ENCODE measurements at regions of chr10 and their contacts with region 1.

Region 1: DNA sequence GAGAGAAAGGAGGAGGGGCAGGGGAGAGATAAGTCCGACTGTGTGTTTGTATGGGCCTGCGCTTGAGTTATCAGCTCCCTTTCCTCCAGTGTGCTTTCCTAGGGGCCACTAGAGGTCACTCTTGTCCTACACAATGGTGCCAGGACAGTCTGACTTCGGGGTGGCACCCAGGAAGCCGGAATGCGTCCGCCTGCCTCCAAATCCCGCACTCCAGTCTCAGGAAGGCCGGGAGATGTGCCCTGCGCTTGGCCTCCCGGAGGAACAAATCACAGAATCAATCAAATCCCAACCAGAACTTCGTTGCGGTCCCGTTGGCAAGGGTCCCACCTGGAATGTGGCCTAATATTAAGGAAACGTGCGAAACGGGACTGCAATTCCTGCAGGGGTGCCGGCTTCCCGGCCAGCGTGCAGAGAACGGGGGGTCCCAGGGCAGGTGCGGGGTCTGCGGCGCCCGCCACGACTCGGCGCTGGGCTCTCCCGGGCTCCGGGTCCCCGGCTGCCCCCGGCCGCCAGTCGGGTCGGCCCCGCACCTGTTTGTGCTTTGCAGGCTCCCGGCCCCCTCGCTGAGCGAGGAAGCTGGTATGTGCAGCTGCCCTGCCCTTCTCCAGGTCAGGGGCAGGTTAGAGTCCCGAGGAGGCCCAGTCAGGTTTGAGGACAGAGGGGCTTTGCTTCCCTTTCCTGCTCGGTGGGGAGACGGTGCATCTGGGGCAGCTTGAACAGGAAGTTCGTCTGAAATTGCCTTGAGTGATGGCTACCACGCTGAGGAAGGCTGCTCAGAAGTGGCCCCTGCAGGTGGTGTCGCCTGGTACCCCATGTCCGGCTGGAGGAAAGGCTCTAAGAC is 21.0 kb upstream of the HPS1 start:
- DNase-seq: peak; percentile 90
- ATAC-seq: peak; percentile 93 to 99
- H3K4me3 ChIP-seq: peak overlapping the region; percentile 76
- H3K27ac ChIP-seq: peak overlapping the region; percentile 78 to 85
- H3K4me1 ChIP-seq: no peaks in the 10 kb centered on the region
- CTCF ChIP-seq: peak; percentile 92
- EP300 ChIP-seq: no peak
- POLR2A ChIP-seq: no peak
- RAD21 ChIP-seq: peak; percentile 96 to 97

Region 2: GRCh38 chr10:98425511-98426352 is 42.0 kb before region 1 on chr10:
- CTCF ChIA-PET with region 1: interaction called, 13 read pairs
- POLR2A ChIA-PET with region 1: no interaction called
- DNase-seq: peak; percentile 64
- ATAC-seq: peak; percentile 80 to 92
- H3K4me3 ChIP-seq: no peak overlapping the region
- H3K27ac ChIP-seq: no peak overlapping the region
- H3K4me1 ChIP-seq: no peaks in the 10 kb centered on the region
- CTCF ChIP-seq: peak; percentile 68
- EP300 ChIP-seq: no peak
- POLR2A ChIP-seq: no peak
- RAD21 ChIP-seq: peak; percentile 56 to 66

Region 3: GRCh38 chr10:98478430-98479222 is 10.9 kb after region 1 on chr10:
- CTCF ChIA-PET with region 1: interaction called, 46 read pairs
- POLR2A ChIA-PET with region 1: no interaction called
- DNase-seq: no peak
- ATAC-seq: no peak
- H3K4me3 ChIP-seq: no peak overlapping the region
- H3K27ac ChIP-seq: no peak overlapping the region
- H3K4me1 ChIP-seq: no peaks in the 10 kb centered on the region
- CTCF ChIP-seq: no peak
- EP300 ChIP-seq: no peak
- POLR2A ChIP-seq: no peak
- RAD21 ChIP-seq: no peak

Region 4: GRCh38 chr10:99172130-99172738 is 704.5 kb after region 1 on chr10:
- CTCF ChIA-PET with region 1: interaction called, 10 read pairs
- POLR2A ChIA-PET with region 1: no interaction called
- DNase-seq: peak; percentile 49 to 60
- ATAC-seq: peak; percentile 88 to 89
- H3K4me3 ChIP-seq: no peak overlapping the region
- H3K27ac ChIP-seq: no peak overlapping the region
- H3K4me1 ChIP-seq: no peaks in the 10 kb centered on the region
- CTCF ChIP-seq: peak; percentile 48
- EP300 ChIP-seq: no peak
- POLR2A ChIP-seq: no peak
- RAD21 ChIP-seq: peak; percentile 64 to 68